ENCODE measurements at regions of chr12 and their contacts with region 1.

Region 1: GRCh38 chr12:102484428-102484958 is 4.1 kb upstream of the IGF1 start:
- DNase-seq: peak; percentile 51
- H3K4me3 Mint-ChIP-seq: peak overlapping the region; percentile 47
- H3K27ac Mint-ChIP-seq: no peak overlapping the region
- H3K4me1 Mint-ChIP-seq: no peaks in the 10 kb centered on the region
- H3K27me3 Mint-ChIP-seq: no peaks in the 10 kb centered on the region
- CTCF ChIP-seq: peak; percentile 92

Region 2: DNA sequence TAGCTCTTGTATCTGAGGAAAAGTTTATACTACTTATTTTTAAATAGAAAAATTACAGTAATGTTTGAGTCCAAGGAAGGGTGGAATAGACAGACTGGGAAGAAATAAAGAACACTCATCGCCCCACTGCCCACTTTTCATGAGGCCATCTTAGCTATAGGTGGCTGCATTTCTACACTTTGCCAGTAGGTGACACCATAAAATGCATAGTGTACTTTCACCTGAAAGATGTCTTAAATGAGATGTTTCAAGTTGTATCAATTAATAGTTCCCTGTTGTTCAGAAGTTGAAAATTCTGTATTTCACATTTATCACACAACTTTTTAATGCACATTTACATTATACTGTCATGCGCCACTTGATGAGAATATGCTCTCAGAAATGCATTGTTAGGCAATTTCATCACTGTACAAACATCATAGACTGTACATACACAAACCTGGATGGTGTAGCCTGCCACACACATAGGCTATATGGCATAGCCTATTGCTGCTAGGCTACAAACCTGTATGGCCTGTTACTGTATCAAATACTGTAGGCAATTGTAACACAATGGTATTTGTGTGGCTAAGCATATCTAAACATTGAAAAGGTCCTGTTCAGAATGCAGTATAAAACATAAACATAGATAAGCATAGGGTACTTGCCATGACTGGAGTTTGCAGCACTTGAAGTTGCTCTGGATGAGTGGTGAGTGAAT is 314.4 kb before region 1 on chr12:
- CTCF ChIA-PET with region 1: no interaction called
- intact Hi-C with region 1: loop called (anchors 1 kb)
- DNase-seq: peak; percentile 20
- H3K4me3 Mint-ChIP-seq: no peak overlapping the region
- H3K27ac Mint-ChIP-seq: no peak overlapping the region
- H3K4me1 Mint-ChIP-seq: peaks cover 7% of the 10 kb centered on the region
- H3K27me3 Mint-ChIP-seq: no peaks in the 10 kb centered on the region
- CTCF ChIP-seq: peak; percentile 46

Region 3: DNA sequence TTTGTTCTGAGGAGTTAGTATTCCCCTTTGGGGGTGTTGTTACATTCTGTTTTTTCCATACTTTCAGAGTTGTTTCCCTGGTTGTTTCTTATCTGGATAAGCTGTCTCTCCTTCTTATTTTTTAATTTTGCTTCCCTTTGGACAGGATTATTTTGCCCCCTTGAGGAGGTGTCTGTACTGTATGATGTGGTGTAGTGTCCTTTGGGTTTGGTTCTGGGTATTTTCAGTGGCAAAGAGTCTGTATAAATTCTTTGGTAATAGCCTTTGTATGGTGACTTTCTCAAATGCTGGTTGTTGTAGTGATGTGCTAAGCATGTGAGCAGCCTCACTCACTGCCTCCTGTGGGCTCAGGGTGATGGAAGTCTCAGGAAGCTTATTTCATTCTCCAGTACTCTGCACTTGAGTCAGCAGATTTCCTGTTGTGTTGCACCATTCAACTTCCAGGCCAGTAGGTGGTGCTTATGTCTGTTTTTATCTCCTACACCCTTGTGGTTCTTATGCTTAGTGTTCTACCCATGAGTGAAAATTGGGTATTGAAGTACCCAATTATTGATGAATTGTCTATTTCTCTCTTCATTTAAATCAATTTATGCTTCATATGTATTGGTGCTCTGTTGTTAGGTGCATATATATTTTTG is 183.6 kb before region 1 on chr12:
- CTCF ChIA-PET with region 1: interaction called, 3 read pairs
- intact Hi-C with region 1: loop called (anchors 1 kb)
- DNase-seq: peak; percentile 38
- H3K4me3 Mint-ChIP-seq: no peak overlapping the region
- H3K27ac Mint-ChIP-seq: no peak overlapping the region
- H3K4me1 Mint-ChIP-seq: no peaks in the 10 kb centered on the region
- H3K27me3 Mint-ChIP-seq: no peaks in the 10 kb centered on the region
- CTCF ChIP-seq: no peak

Region 4: GRCh38 chr12:102631269-102631668 is 146.8 kb after region 1 on chr12:
- CTCF ChIA-PET with region 1: no interaction called
- intact Hi-C with region 1: loop called (anchors 10 kb)
- DNase-seq: peak; percentile 13
- H3K4me3 Mint-ChIP-seq: no peak overlapping the region
- H3K27ac Mint-ChIP-seq: no peak overlapping the region
- H3K4me1 Mint-ChIP-seq: no peaks in the 10 kb centered on the region
- H3K27me3 Mint-ChIP-seq: no peaks in the 10 kb centered on the region
- CTCF ChIP-seq: no peak

Region 5: DNA sequence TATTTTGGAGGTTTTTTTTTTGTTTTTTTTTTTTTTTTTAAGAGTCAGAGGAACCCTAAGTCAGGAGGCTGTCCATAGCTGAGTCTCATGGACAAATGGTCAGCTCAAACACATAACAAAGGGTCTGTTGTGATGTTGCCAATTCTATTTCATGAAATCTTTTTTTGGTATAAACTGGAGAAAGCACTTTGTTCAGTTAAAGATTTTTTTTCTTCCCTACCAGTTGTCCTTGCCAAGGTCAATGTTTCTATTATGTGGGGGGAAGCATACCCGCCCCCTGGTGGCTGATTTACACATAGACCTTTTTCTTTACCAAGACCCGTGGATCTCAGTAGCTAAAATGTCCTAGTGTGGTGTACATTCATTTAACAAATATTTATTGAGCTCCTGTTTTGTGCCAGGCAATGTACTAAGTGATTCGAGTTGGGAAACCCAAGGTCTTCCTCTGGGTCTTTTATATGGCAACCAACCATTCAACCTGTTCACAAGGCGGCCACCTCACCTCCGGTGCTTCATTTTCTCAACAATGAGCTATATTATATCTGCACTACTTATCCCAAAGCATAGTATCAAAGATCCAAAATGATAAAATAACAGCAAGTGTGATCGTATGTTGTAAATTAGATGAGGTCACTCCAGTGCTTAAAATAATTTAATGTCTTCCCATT is 218.1 kb after region 1 on chr12:
- CTCF ChIA-PET with region 1: interaction called, 3 read pairs
- intact Hi-C with region 1: loop called (anchors 5 kb)
- DNase-seq: peak; percentile 55
- H3K4me3 Mint-ChIP-seq: no peak overlapping the region
- H3K27ac Mint-ChIP-seq: no peak overlapping the region
- H3K4me1 Mint-ChIP-seq: no peaks in the 10 kb centered on the region
- H3K27me3 Mint-ChIP-seq: no peaks in the 10 kb centered on the region
- CTCF ChIP-seq: peak; percentile 38

Region 6: GRCh38 chr12:102740141-102740955 is 255.9 kb after region 1 on chr12:
- CTCF ChIA-PET with region 1: interaction called, 4 read pairs
- intact Hi-C with region 1: loop called (anchors 2 kb)
- DNase-seq: no peak
- H3K4me3 Mint-ChIP-seq: no peak overlapping the region
- H3K27ac Mint-ChIP-seq: no peak overlapping the region
- H3K4me1 Mint-ChIP-seq: no peaks in the 10 kb centered on the region
- H3K27me3 Mint-ChIP-seq: no peaks in the 10 kb centered on the region
- CTCF ChIP-seq: no peak

Region 7: DNA sequence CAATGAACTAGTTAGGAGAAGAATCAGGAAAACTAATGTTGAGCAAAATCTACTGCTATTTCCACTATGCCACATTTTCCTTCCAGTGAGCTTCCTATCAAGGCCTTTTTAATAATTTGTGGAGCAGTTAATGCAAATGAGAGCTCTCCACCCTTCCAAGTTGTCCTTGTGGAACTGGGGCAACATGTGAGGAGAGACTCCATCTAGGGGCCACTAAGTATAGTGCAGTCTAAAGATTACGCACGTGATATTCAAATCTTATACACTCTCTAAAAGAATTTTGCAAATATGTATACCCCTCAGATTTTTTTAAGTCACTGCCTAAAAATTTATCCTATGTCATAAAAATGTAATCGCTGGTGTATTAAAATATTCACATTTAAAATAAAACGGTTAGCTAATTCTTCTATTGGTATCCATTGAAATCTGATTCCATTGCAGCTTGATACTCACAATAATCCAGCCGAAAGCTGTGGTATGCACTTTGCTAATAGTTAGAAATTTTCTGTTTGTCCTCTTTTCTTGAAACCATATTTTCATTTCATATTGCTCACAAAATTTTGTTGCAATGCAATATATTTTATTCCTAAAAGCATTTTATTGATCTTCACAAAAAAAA is 332.4 kb after region 1 on chr12:
- CTCF ChIA-PET with region 1: no interaction called
- intact Hi-C with region 1: loop called (anchors 5 kb)
- DNase-seq: peak; percentile 17
- H3K4me3 Mint-ChIP-seq: no peak overlapping the region
- H3K27ac Mint-ChIP-seq: no peak overlapping the region
- H3K4me1 Mint-ChIP-seq: peaks cover 11% of the 10 kb centered on the region
- H3K27me3 Mint-ChIP-seq: peaks cover 16% of the 10 kb centered on the region
- CTCF ChIP-seq: peak; percentile 68

Measured in Calu3 (cell line).